ENCODE measurements at regions of chr3 and their contacts with region 1.

Region 1: GRCh38 chr3:19046440-19046839 is 101.9 kb upstream of the KCNH8 start:
- DNase-seq: no peak
- H3K4me3 ChIP-seq: no peak overlapping the region
- H3K27ac ChIP-seq: no peak overlapping the region
- H3K4me1 ChIP-seq: no peaks in the 10 kb centered on the region
- H3K27me3 ChIP-seq: no peaks in the 10 kb centered on the region
- CTCF ChIP-seq: peak in 3 of 6 experiments; percentile 9 to 41 (median 31)
- POLR2A ChIP-seq: no peak

Region 2: DNA sequence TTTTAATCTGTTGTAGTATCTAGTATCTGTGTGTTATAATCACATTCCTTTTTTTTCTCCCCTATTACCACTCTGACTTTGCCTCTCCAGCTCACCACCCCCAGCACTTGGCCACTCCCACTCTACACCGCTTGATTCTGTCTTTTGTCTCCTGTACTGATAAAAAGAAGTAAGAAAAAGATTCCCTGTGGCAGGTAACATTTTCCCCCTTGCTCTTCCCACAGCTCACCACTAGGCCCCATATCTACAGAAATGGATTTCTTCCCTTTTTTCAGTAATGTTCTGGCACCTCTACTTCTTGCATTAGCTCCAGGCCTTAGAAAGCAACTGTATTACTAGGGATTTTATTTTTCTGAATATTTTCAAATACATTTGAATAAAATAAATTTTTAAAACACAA is 127.5 kb after region 1 on chr3:
- intact Hi-C with region 1: no loop called
- DNase-seq: no peak
- H3K4me3 ChIP-seq: no peak overlapping the region
- H3K27ac ChIP-seq: no peak overlapping the region
- H3K4me1 ChIP-seq: no peaks in the 10 kb centered on the region
- H3K27me3 ChIP-seq: no peaks in the 10 kb centered on the region
- CTCF ChIP-seq: no peak
- POLR2A ChIP-seq: no peak

Region 3: DNA sequence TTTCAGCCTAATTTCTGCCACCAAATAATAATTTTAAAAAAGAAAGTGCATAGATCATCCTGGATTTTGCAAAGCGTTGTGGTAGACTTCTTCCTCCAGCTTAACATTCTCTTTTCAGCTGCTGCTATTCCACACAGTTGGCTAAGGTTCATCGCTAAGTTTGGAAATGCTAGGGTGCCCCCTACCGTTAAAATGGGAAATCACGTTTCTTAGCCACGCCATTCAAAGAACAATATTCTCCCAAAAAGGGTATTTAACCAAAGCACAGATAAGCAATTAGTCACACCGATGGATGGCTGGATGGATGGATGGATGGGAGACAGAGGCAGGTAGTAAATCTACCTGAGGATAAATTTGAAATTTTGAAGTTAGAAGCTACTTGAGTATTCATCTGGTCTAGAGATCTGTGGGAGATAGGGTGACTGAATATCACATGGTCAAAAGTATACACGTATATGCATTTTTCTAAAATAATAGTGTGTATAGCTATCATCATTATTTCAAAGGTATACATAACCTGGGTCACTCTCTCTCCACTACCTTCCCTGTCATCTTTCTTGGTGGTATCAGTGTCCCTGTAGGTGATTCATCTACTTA is 820.4 kb after region 1 on chr3:
- intact Hi-C with region 1: loop called in 1 of 2 experiments (anchors 10 kb)
- DNase-seq: peak; percentile 26 to 74 (median 44)
- H3K4me3 ChIP-seq: no peak overlapping the region
- H3K27ac ChIP-seq: no peak overlapping the region
- H3K4me1 ChIP-seq: no peaks in the 10 kb centered on the region
- H3K27me3 ChIP-seq: no peaks in the 10 kb centered on the region
- CTCF ChIP-seq: peak; percentile 58 to 75 (median 70)
- POLR2A ChIP-seq: no peak

Measured in adrenal gland (tissue), 19 donors.